Activated B cell treated with CpG ODN at 0.5 μM for 24 hours (primary cell): ENCODE measurements at regions of chr6 and their contacts with region 1.

Region 1: DNA sequence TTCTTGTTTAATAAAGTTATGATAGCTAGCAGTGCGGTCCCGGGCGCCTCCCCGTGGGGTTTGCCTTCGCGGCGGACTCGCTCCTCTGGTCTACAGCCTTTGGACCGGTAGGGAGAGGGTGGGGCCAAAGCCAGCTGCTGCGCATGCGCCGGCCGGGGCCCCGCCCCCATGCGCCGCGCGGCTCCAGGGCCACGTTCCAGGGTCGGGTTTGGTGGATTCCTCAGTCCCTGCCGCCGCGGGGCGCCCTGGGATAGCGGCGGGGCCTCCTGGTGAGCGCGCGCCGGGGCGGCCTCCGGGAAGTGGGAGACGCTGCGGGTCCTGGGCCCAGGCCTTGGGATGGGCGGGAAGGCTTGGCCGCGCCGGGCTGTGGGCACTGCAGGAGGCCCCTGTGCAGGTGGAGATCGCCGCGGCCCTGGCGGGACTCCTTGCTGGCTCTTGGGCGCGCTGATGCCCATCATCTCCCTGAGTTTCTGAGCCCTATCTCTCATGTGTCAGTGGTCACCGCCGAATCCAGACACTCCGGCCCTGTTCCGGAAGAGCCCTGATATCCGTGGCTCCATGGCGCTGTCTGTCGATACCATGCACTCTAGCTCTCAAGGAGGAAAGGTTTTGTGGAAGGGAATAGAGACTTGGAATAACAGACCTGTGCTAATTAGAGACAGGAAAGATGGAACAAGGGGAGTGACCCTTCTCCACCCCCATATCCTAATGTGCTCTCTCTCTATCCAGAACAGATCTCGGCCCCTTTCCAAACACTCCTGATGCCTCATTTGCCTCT is at the start of gene VARS2:
- DNase-seq: peak; percentile 94
- ATAC-seq: peak; percentile 96
- H3K4me3 Mint-ChIP-seq: peak within 1 kb of the TSS; percentile 90
- H3K27ac Mint-ChIP-seq: peak within 1 kb of the TSS; percentile 81
- H3K4me1 Mint-ChIP-seq: peaks cover 24% of the 10 kb centered on the region
- H3K27me3 Mint-ChIP-seq: no peaks in the 10 kb centered on the region
- CTCF ChIP-seq: no peak
- total RNA-seq, gene VARS2: 39.4 and 47.8 TPM in 2 replicates

Region 2: DNA sequence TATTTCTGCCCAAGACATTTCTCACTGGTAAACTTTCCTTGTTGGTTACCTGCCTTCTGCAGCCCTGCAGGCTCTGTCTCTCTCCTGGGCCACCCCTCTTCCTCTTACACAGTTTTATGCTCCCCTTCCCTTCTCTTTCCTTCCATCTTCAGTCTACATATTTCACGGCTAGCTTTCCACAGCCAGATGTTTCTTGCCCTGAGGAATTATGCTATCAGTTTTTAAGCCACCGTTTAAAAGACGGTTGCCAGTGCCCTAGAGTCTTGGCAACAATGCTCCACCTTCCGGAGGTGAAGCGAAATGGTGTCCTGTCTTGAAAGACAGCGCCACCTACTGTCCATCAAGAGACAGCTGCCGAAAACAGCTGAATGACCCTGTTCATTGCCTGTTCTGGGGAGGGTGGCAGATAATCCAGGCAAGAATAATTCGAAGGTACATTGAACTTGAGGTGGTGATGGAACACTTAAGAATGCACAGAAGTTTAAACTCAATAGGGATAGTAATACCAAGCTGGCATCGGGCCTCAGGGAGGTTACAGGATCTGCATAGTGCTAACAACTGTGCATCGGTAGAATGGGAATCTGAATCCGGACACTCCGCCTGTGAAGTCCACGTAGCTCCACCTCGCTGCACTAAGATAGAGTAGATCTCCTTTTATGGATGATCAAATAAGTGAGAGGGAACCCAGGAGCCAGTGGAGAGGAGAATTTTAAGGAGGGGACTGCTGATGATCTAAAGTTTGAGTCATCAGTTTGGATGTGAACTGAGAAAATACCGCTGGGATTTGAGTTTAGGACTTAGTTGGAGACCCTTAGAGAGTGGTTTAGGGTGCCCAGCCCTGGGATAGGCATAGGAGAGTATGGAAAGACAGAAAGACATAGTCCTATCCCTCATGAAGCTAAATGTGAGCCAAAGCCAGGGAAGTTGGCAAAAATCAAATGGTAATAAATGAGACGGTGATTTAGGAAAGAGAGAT is 783.1 kb before region 1 on chr6:
- CTCF ChIA-PET with region 1: no interaction called
- POLR2A ChIA-PET with region 1: no interaction called
- intact Hi-C with region 1: no loop called
- DNase-seq: no peak
- ATAC-seq: peak; percentile 89
- H3K4me3 Mint-ChIP-seq: no peak overlapping the region
- H3K27ac Mint-ChIP-seq: no peak overlapping the region
- H3K4me1 Mint-ChIP-seq: peaks cover 15% of the 10 kb centered on the region
- H3K27me3 Mint-ChIP-seq: peaks cover 62% of the 10 kb centered on the region
- CTCF ChIP-seq: peak; percentile 83

Region 3: DNA sequence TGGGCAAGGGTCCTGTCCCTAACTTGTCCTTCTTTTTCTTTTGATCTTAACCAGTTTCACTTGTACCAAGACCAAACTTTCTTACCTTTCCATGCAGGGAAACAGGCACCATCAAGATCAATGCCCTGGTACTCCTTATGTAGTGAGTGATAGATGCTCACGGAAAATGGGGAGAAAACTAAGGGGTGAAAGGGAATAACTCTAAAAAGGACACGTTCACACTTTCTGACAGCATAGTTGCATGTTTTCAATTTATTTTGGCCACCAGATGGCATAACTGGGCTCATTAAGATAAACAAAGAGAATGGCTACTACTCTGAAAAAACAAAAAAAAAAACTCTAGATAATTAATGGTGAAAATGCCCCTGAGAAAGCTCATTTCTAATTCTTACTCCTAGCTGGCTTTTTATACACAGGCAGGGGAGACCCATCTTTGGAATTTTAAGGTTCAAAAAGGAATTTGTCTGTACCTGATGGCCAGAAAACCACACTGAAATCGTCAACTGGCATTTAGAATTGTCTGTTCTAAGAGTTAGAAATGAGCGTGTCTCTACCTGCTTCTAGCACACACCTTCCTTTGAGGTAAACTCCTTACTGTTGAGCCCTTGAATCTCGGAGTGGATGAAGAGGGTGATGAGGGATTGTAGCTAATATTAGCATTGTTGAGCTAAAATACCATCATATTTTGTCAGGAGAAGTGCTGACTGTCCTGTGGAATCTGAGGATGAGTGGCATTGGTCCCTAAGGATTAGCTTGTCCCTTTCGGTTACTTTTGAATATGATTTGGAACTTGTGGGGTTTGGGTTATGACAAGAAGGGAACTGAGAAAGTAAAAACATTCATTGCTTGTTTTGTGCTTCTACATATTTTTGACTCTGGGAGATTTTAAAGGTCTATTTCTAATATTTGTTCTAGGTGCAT is 92.1 kb before region 1 on chr6:
- CTCF ChIA-PET with region 1: interaction called, 19 read pairs
- POLR2A ChIA-PET with region 1: no interaction called
- intact Hi-C with region 1: no loop called
- DNase-seq: no peak
- ATAC-seq: no peak
- H3K4me3 Mint-ChIP-seq: no peak overlapping the region
- H3K27ac Mint-ChIP-seq: no peak overlapping the region
- H3K4me1 Mint-ChIP-seq: peaks cover 6% of the 10 kb centered on the region
- H3K27me3 Mint-ChIP-seq: peaks cover 9% of the 10 kb centered on the region
- CTCF ChIP-seq: no peak

Region 4: DNA sequence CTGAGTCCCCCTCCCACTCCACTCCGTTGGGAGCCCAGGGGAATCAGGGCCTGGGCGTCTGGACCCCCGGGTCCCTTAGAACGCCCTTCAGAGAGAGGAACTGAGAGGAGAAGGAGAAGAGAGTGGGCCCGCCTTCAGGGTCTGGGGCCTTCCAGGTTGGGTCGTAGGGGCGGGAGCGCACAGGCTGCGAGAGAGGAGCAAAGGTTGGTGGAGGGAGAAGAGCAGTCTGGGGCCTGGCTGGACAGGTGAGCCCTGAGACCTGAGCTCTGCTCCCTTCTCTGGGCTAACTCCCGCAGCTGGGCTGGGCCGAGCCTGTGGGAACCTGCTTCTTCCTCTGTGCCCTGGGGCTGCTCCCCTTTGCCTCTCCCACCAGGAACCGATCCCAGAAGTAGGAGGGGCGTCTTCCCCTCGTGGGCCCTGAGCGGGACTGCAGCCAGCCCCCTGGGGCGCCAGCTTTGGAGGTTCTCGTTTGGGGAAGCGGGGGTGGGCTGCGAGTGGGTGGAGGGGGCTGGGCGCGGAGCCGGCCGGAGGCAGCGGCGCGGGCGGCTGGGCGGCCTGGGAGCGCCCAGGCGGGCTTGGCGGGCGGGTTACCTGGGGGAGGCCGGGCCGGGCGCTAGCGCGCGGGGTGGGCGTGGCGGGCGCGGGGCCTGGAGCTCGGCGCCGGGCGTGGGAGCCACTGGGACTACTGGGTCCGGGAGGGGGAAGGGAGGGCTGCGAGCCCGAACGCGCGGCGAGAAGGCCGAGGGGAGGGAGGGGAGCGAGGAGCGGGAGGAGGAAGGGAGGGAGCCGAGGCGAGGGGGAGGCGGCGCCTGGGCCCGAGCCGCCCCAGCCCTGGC is 30.4 kb before region 1 on chr6 and contains the start of gene DDR1:
- CTCF ChIA-PET with region 1: interaction called, 4 read pairs
- POLR2A ChIA-PET with region 1: interaction called, 22 read pairs
- intact Hi-C with region 1: loop called (anchors 2 kb)
- DNase-seq: peak; percentile 47
- ATAC-seq: peak; percentile 59
- H3K4me3 Mint-ChIP-seq: peak within 1 kb of the TSS; percentile 84
- H3K27ac Mint-ChIP-seq: peak within 1 kb of the TSS; percentile 80
- H3K4me1 Mint-ChIP-seq: peaks cover 64% of the 10 kb centered on the region
- H3K27me3 Mint-ChIP-seq: no peaks in the 10 kb centered on the region
- CTCF ChIP-seq: no peak
- total RNA-seq, gene DDR1: 16.8 and 18.7 TPM in 2 replicates

Region 5: GRCh38 chr6:30955367-30956042 is 41.2 kb after region 1 on chr6:
- CTCF ChIA-PET with region 1: no interaction called
- POLR2A ChIA-PET with region 1: interaction called, 17 read pairs
- intact Hi-C with region 1: loop called (anchors 2 kb)
- DNase-seq: peak; percentile 72
- ATAC-seq: peak; percentile 93
- H3K4me3 Mint-ChIP-seq: peak overlapping the region; percentile 82
- H3K27ac Mint-ChIP-seq: peak overlapping the region; percentile 82
- H3K4me1 Mint-ChIP-seq: peaks cover 21% of the 10 kb centered on the region
- H3K27me3 Mint-ChIP-seq: peaks cover 5% of the 10 kb centered on the region
- CTCF ChIP-seq: no peak

Region 6: GRCh38 chr6:31079656-31080261 is 165.5 kb after region 1 on chr6:
- CTCF ChIA-PET with region 1: interaction called, 41 read pairs
- POLR2A ChIA-PET with region 1: interaction called, 10 read pairs
- intact Hi-C with region 1: loop called (anchors 1 kb)
- DNase-seq: peak; percentile 34
- ATAC-seq: peak; percentile 84
- H3K4me3 Mint-ChIP-seq: peak overlapping the region; percentile 46
- H3K27ac Mint-ChIP-seq: no peak overlapping the region
- H3K4me1 Mint-ChIP-seq: peaks cover 3% of the 10 kb centered on the region
- H3K27me3 Mint-ChIP-seq: peaks cover 5% of the 10 kb centered on the region
- CTCF ChIP-seq: peak; percentile 82